ENCODE measurements at regions of chr2 and their contacts with region 1.

Region 1: DNA sequence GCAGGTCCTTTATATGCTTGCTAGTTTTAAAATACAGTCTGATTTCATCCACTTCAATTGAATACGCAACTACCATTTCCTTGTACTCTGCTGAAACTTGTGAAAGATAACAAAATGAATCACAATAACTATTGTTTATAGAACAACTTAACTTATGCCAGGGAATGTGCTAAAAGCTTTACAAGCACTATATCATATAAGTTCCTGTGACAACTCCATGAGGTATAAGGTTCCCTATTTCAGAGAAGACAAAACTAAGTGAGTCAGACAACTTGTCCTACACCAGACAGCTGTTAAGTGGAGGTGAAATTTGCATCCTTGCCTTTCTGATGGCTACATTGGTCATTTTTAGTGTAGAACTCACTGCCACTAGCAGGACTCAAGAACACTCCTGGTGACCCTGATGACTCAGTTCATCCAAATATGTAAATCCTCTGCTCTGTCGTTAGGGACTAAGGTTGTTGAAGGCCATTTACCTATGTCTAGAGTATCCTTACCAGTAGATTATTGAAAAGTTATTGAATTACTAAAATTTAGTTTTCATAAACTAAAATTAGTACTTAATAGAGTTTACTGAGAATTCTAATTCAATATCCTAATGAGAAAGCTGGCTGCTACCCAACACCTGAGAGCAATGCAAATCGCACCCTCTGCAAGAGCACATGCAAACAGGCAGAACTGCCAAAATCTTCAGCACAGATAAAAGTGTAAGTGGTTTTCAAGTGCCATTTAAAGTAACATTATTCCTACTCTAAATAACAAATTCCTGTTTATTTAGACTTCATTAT is 636.2 kb downstream of the NRXN1 start:
- DNase-seq: no peak
- H3K4me3 ChIP-seq: no peak overlapping the region
- H3K27ac ChIP-seq: no peak overlapping the region
- H3K4me1 ChIP-seq: no peaks in the 10 kb centered on the region
- H3K27me3 ChIP-seq: no peaks in the 10 kb centered on the region
- CTCF ChIP-seq: no peak

Region 2: GRCh38 chr2:48952143-48952542 is 1443.6 kb before region 1 on chr2:
- CTCF ChIA-PET with region 1: no interaction called
- dilution Hi-C with region 1: no loop called
- in situ Hi-C with region 1: loop called in 1 of 2 experiments (anchors 25 kb)
- intact Hi-C with region 1: no loop called
- DNase-seq: no peak
- H3K4me3 ChIP-seq: no peak overlapping the region
- H3K27ac ChIP-seq: no peak overlapping the region
- H3K4me1 ChIP-seq: no peaks in the 10 kb centered on the region
- H3K27me3 ChIP-seq: no peaks in the 10 kb centered on the region
- CTCF ChIP-seq: no peak

Region 3: GRCh38 chr2:50347358-50348044 is 48.2 kb before region 1 on chr2:
- CTCF ChIA-PET with region 1: no interaction called
- dilution Hi-C with region 1: loop called (anchors 5 kb)
- in situ Hi-C with region 1: no loop called
- intact Hi-C with region 1: no loop called
- DNase-seq: no peak
- H3K4me3 ChIP-seq: no peak overlapping the region
- H3K27ac ChIP-seq: no peak overlapping the region
- H3K4me1 ChIP-seq: no peaks in the 10 kb centered on the region
- H3K27me3 ChIP-seq: peaks cover 37% of the 10 kb centered on the region
- CTCF ChIP-seq: no peak